Mammary epithelial cell (primary cell): ENCODE measurements at regions of chr1 and their contacts with region 1.

Region 1: DNA sequence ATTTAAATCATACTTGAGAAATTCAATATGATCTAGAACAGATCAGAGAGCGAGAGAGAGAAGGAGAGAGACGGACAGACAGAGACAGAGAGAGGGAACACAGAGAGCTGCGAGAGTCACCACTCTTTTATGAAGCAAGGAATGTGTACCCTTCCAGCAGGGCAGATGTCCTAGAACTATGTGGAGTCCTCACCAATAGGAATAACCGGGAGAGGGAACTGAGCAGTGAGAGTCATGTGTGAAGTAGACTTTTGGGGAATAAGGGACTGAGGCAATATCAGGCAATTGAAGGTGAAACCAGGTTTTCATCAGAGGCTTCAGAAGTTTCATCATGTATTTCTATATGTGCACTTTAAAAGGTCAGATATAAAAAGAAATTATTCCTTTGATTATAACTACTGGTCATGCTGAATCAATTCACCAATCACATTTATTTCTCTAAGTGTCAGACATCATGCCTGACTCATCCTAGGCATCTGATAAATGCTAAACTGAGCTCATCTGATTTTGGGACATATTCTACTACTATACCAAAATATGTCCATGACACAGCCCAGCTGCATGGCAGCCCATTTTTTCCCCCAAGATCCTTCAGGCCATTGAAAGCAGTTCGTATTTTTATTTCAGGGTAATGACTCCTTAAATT is 22.4 kb downstream of the VTCN1 start:
- DNase-seq: no peak
- H3K4me3 ChIP-seq: no peak overlapping the region
- H3K27ac ChIP-seq: no peak overlapping the region
- H3K4me1 ChIP-seq: no peaks in the 10 kb centered on the region
- H3K27me3 ChIP-seq: no peaks in the 10 kb centered on the region
- CTCF ChIP-seq: no peak

Region 2: GRCh38 chr1:117110774-117111173 is 77.5 kb before region 1 on chr1:
- CTCF ChIA-PET with region 1: no interaction called
- dilution Hi-C with region 1: no loop called
- in situ Hi-C with region 1: no loop called
- intact Hi-C with region 1: no loop called
- DNase-seq: peak; percentile 70
- H3K4me3 ChIP-seq: no peak overlapping the region
- H3K27ac ChIP-seq: peak overlapping the region; percentile 32
- H3K4me1 ChIP-seq: peaks cover 19% of the 10 kb centered on the region
- H3K27me3 ChIP-seq: no peaks in the 10 kb centered on the region
- CTCF ChIP-seq: no peak

Region 3: GRCh38 chr1:117171900-117172511 is 16.3 kb before region 1 on chr1:
- CTCF ChIA-PET with region 1: no interaction called
- dilution Hi-C with region 1: no loop called
- in situ Hi-C with region 1: no loop called
- intact Hi-C with region 1: loop called (anchors 2 kb)
- DNase-seq: peak; percentile 97
- H3K4me3 ChIP-seq: no peak overlapping the region
- H3K27ac ChIP-seq: peak overlapping the region; percentile 35
- H3K4me1 ChIP-seq: peaks cover 13% of the 10 kb centered on the region
- H3K27me3 ChIP-seq: no peaks in the 10 kb centered on the region
- CTCF ChIP-seq: no peak

Region 4: GRCh38 chr1:117260761-117261423 is 72.6 kb after region 1 on chr1:
- CTCF ChIA-PET with region 1: no interaction called
- dilution Hi-C with region 1: loop called (anchors 5 kb)
- in situ Hi-C with region 1: no loop called
- intact Hi-C with region 1: no loop called
- DNase-seq: no peak
- H3K4me3 ChIP-seq: no peak overlapping the region
- H3K27ac ChIP-seq: no peak overlapping the region
- H3K4me1 ChIP-seq: no peaks in the 10 kb centered on the region
- H3K27me3 ChIP-seq: no peaks in the 10 kb centered on the region
- CTCF ChIP-seq: no peak

Region 5: GRCh38 chr1:117271571-117272358 is 83.5 kb after region 1 on chr1:
- CTCF ChIA-PET with region 1: no interaction called
- dilution Hi-C with region 1: no loop called
- in situ Hi-C with region 1: no loop called
- intact Hi-C with region 1: no loop called
- DNase-seq: no peak
- H3K4me3 ChIP-seq: no peak overlapping the region
- H3K27ac ChIP-seq: no peak overlapping the region
- H3K4me1 ChIP-seq: no peaks in the 10 kb centered on the region
- H3K27me3 ChIP-seq: no peaks in the 10 kb centered on the region
- CTCF ChIP-seq: no peak